K562 (cell line): ENCODE measurements at regions of chr9 and their contacts with region 1.

Region 1: DNA sequence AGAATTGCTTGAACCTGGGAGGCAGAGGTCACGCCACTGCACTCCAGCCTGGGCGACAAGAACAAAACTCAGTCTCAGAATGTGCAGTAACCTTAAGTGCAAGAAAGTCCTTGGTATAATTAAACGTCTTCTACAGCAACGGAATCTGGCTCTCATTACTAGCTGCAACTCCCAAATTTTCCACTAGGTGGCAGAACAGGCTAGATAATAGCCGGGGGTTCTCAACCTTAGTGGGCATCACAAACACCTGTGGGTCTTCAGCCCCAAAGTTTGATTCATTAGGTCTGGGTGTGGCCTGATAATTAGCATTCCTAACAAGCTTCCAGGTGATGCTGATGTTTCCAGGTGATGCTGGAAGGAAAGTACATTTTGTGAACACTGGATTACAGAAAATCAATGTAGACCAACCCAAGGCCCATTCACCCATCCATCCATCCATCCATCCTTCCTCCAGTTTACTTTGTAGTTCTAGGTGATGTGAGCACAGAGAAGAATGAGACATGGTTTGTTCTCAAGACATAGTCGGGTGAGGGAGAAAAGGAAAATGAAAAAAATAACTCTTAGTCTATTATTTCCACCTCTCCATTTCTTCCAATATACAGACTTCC is 37.3 kb downstream of the FBXW2 start:
- DNase-seq: peak; percentile 75 to 84 (median 77)
- ATAC-seq: peak; percentile 92
- H3K4me3 ChIP-seq: no peak overlapping the region
- H3K27ac ChIP-seq: no peak overlapping the region
- H3K4me1 ChIP-seq: no peaks in the 10 kb centered on the region; a peak in 1 of 5 replicates
- H3K27me3 ChIP-seq: no peaks in the 10 kb centered on the region
- CTCF ChIP-seq: peak; percentile 78 to 89 (median 85)
- EP300 ChIP-seq: no peak
- POLR2A ChIP-seq: no peak
- RAD21 ChIP-seq: peak; percentile 91 to 94

Region 2: GRCh38 chr9:120868676-120869359 is 112.9 kb after region 1 on chr9:
- CTCF ChIA-PET with region 1: no interaction called
- POLR2A ChIA-PET with region 1: no interaction called
- in situ Hi-C with region 1: no loop called
- intact Hi-C with region 1: loop called (anchors 5 kb)
- DNase-seq: peak; percentile 100
- ATAC-seq: peak; percentile 98
- H3K4me3 ChIP-seq: peak overlapping the region; percentile 41
- H3K27ac ChIP-seq: peak overlapping the region; percentile 76
- H3K4me1 ChIP-seq: peaks cover 13 to 27% of the 10 kb centered on the region in 2 experiments
- H3K27me3 ChIP-seq: no peaks in the 10 kb centered on the region
- CTCF ChIP-seq: peak in 1 of 3 experiments; percentile 91; a peak in 2 of 6 replicates
- EP300 ChIP-seq: no peak
- POLR2A ChIP-seq: no peak
- RAD21 ChIP-seq: peak in 1 of 2 experiments; percentile 94; a peak in 2 of 4 replicates

Region 3: DNA sequence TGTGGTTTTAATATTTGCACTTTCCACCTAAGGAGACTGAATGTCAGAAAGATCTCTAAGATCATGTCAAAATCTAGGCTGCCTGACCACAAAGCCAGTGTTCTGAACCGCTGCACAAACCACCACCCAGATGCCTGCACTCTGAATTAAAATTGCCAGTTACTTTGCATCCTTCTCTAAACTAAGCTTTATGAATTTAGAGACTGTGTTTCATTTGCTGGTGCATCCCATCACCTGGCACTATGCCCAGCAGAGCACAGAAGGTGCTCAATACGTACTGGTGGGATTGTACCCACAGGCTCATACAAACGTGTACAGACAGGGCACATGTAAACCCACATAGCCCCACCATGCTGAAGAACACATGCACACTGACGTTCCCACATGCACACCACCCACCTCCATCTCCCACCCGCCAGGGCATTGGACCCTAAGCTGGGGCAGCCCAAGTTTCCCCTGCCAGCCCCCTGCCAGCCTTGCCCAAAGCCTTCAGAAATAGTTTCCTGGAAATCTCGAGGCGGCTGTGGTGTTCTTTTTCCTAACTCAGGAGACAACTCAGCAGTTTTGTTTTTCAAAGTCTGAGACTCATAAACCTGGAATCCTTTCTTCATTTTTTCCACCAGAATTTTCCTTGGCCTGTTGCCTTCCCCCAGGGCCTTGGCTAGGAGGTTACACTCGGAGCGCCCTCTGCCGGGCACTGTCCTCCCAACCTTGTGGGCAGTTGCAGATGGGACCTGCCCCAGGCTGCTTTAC is 180.3 kb after region 1 on chr9:
- CTCF ChIA-PET with region 1: interaction called, 12 read pairs
- POLR2A ChIA-PET with region 1: interaction called, 3 read pairs
- in situ Hi-C with region 1: no loop called
- intact Hi-C with region 1: loop called (anchors 1 kb)
- DNase-seq: peak; percentile 85 to 92 (median 90)
- ATAC-seq: peak; percentile 96
- H3K4me3 ChIP-seq: no peak overlapping the region
- H3K27ac ChIP-seq: no peak overlapping the region
- H3K4me1 ChIP-seq: peaks cover 13 to 40% of the 10 kb centered on the region in 2 experiments
- H3K27me3 ChIP-seq: peaks cover 2 to 7% of the 10 kb centered on the region in 2 experiments; a peak in 3 of 5 replicates
- CTCF ChIP-seq: peak; percentile 91 to 96 (median 92)
- EP300 ChIP-seq: no peak
- POLR2A ChIP-seq: no peak
- RAD21 ChIP-seq: peak; percentile 89 to 96

Region 4: DNA sequence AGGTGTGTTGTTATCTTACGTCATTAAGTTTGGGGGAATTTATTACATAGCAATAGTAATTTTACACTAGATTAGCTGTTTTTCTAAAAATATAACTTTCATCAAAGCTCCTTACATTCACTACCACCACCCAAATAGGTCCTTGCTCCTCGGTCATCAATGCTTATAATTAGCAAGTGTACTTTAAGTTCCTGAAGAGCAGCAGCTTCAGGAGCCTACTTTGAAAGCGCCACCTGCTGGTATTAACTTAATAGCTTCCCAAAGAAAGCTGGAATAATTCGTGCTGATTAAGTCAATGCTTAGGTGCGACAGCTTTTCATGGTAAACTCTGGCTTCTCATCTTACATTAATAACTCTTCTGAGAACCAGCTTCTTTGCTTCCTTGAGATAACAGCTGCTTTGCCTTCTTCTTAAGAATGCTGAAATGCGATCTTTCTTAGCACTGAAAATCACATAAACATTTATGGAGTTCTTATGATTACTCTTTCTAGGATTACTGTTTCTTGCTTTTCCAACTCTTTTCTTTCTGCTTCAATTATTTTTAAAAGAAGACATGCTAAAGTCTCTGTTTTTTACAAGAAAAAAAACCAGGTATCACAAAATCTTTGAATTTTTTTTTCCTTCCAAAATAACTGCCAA is 304.2 kb after region 1 on chr9:
- CTCF ChIA-PET with region 1: no interaction called
- POLR2A ChIA-PET with region 1: no interaction called
- in situ Hi-C with region 1: no loop called
- intact Hi-C with region 1: loop called (anchors 5 kb)
- DNase-seq: peak; percentile 24 to 69 (median 38)
- ATAC-seq: peak; percentile 74
- H3K4me3 ChIP-seq: no peak overlapping the region
- H3K27ac ChIP-seq: no peak overlapping the region
- H3K4me1 ChIP-seq: no peaks in the 10 kb centered on the region; a peak in 1 of 5 replicates
- H3K27me3 ChIP-seq: no peaks in the 10 kb centered on the region
- CTCF ChIP-seq: peak; percentile 74 to 79 (median 74)
- EP300 ChIP-seq: no peak
- POLR2A ChIP-seq: no peak
- RAD21 ChIP-seq: peak; percentile 62 to 71

Region 5: DNA sequence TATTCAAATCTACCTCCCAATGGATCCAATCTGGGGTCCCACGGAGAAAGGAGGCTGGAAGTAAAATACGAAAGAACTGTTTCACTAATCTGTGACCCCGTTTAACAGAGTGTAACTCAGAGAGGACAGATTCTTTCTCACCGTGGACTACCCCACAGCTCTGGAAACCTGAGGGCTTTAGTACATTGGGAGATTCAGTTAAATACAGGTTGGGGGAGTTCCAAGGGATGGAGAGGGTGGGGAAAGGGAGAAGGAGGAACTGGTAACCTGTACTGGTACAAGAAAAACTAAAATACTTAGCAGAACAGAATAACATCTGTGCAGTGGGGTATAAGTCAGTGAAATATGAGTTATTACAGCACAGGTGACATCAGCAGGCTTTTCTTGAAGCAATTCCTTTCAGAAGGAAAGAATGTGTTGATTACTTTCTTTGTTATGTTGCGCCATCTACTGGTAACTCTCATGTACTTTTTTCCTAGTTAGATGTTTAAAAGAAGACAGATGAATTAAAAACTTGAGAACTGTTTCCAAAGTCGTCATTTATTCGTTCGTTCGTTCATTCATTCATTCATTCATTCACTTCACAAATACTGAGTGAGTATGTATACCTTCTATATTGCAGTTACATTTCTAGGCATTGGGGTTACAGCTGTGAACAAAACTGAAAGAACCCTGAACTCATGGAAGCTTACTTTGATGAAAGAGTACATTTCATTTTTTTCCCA is 644.1 kb after region 1 on chr9:
- CTCF ChIA-PET with region 1: interaction called, 6 read pairs
- POLR2A ChIA-PET with region 1: no interaction called
- in situ Hi-C with region 1: loop called (anchors 10 kb)
- intact Hi-C with region 1: loop called (anchors 5 kb)
- DNase-seq: peak; percentile 42 to 77 (median 46)
- ATAC-seq: peak; percentile 79
- H3K4me3 ChIP-seq: no peak overlapping the region
- H3K27ac ChIP-seq: no peak overlapping the region
- H3K4me1 ChIP-seq: peaks cover 0 to 5% of the 10 kb centered on the region in 2 experiments; a peak in 2 of 5 replicates
- H3K27me3 ChIP-seq: no peaks in the 10 kb centered on the region
- CTCF ChIP-seq: peak; percentile 43 to 86 (median 71); a peak in 3 of 6 replicates
- EP300 ChIP-seq: no peak
- POLR2A ChIP-seq: no peak
- RAD21 ChIP-seq: peak; percentile 93 to 96